ENCODE measurements at regions of chr2 and their contacts with region 1.

Region 1: GRCh38 chr2:199739413-199740110 is 111.4 kb downstream of the FTCDNL1 start:
- DNase-seq: peak; percentile 57 to 96
- H3K4me3 ChIP-seq: no peak overlapping the region
- H3K27ac ChIP-seq: no peak overlapping the region
- H3K4me1 ChIP-seq: peaks cover 2 to 11% (median 6%) of the 10 kb centered on the region in 4 experiments; a peak in 4 of 7 replicates
- H3K27me3 ChIP-seq: no peaks in the 10 kb centered on the region
- CTCF ChIP-seq: peak; percentile 76 to 82 (median 81)
- EP300 ChIP-seq: no peak
- POLR2A ChIP-seq: no peak
- RAD21 ChIP-seq: peak; percentile 91 to 92

Region 2: DNA sequence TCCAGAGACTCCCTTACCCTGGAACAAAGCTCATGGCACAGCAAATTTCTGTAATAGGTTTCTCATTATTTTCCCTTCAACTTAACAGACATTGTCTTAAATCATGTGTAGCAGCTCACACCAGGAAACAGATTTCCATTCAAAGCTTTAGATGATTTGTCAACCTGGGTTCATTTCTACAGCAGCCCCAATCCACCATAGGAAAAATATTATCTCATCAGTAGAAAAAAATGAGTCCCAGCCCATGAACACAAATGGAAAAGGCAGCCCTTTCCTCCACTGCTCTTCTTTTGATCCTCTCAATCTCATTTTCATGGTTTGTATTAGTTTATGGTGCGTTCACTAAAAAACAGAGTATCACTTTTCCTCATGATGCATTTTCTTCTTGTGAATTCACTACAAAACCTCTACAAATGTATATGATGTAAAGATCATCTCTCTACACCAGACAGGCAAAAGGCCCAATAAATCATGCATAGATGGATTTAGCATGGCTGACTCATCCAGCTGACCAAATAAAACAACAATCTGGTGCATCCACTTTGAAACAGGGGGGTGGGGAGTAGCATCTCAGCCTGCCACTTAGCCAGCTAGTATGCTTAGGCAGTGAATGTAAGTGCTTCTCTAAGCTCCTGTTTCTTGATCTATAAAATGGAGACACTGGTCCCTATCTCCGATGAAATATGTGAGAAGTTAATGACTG is 360.5 kb before region 1 on chr2:
- CTCF ChIA-PET with region 1: no interaction called
- POLR2A ChIA-PET with region 1: no interaction called
- DNase-seq: no peak
- H3K4me3 ChIP-seq: no peak overlapping the region
- H3K27ac ChIP-seq: no peak overlapping the region
- H3K4me1 ChIP-seq: no peaks in the 10 kb centered on the region
- H3K27me3 ChIP-seq: no peaks in the 10 kb centered on the region
- CTCF ChIP-seq: no peak
- EP300 ChIP-seq: no peak
- POLR2A ChIP-seq: no peak
- RAD21 ChIP-seq: no peak

Region 3: GRCh38 chr2:199471443-199472057 is 268.0 kb before region 1 on chr2:
- CTCF ChIA-PET with region 1: interaction called, 15 read pairs
- POLR2A ChIA-PET with region 1: no interaction called
- DNase-seq: peak in 1 of 2 experiments; percentile 94
- H3K4me3 ChIP-seq: peak overlapping the region; percentile 29 to 60 (median 40); a peak in 7 of 8 replicates
- H3K27ac ChIP-seq: no peak overlapping the region
- H3K4me1 ChIP-seq: peaks cover 8 to 23% (median 14%) of the 10 kb centered on the region in 4 experiments
- H3K27me3 ChIP-seq: peaks cover 41 to 61% (median 57%) of the 10 kb centered on the region in 4 experiments
- CTCF ChIP-seq: peak in 2 of 3 experiments; percentile 81 to 93; a peak in 3 of 4 replicates
- EP300 ChIP-seq: 0 out of 3 replicates have a peak, but pooled peaks of 1 of the 2 experiments have one; percentile 23
- POLR2A ChIP-seq: no peak
- RAD21 ChIP-seq: peak; percentile 54 to 70

Region 4: GRCh38 chr2:199596549-199596948 is 143.0 kb before region 1 on chr2:
- CTCF ChIA-PET with region 1: interaction called, 13 read pairs
- POLR2A ChIA-PET with region 1: no interaction called
- DNase-seq: no peak
- H3K4me3 ChIP-seq: no peak overlapping the region
- H3K27ac ChIP-seq: no peak overlapping the region
- H3K4me1 ChIP-seq: no peaks in the 10 kb centered on the region
- H3K27me3 ChIP-seq: no peaks in the 10 kb centered on the region
- CTCF ChIP-seq: peak in 2 of 3 experiments; percentile 51 to 59; a peak in 3 of 4 replicates
- EP300 ChIP-seq: no peak
- POLR2A ChIP-seq: no peak
- RAD21 ChIP-seq: peak; percentile 37 to 53; a peak in 3 of 4 replicates

Region 5: DNA sequence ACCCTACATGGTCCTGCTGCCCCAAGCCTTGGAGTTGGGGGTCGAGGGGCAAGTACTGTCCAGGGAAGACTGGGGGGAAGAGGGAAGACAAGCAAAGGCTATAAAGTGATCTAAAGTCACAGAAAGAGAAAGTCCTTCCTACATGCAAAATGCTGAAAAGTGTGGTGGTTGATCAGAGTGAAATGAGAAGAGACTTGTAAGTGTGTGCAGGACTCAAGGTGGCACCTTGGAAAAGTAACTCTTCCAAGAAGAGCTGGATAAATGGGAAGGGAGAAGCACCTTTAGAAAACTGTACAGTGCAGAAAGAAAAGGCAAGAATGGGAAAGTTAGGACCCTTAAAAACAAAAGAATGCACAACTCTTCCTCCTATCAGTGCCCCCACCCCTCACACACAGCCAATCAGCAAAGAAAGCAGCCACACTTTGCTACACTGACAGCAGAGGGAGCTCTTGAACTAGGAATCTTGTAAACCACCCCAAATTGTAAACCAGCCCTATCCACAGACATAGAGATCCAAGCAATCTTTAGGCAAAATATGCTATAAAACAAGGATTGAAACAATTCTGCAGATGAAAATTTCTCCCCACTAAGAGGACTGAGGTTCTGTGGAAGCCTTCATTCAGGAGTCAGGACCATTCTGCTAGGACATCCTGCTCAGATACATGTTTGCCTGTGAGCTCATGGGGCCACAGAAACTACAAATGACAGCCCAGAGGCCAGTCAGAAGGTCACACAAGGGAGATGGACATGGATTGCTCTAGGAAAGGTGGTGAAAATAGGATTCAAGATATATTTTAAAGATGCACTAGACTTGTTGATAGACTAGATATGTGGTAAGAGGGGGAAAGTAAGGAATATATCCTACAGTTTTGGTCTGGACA is 35.0 kb before region 1 on chr2:
- CTCF ChIA-PET with region 1: interaction called, 68 read pairs
- POLR2A ChIA-PET with region 1: interaction called, 3 read pairs
- DNase-seq: peak in 1 of 2 experiments; percentile 59
- H3K4me3 ChIP-seq: no peak overlapping the region
- H3K27ac ChIP-seq: no peak overlapping the region
- H3K4me1 ChIP-seq: no peaks in the 10 kb centered on the region
- H3K27me3 ChIP-seq: no peaks in the 10 kb centered on the region
- CTCF ChIP-seq: peak; percentile 34 to 87 (median 85)
- EP300 ChIP-seq: no peak
- POLR2A ChIP-seq: no peak
- RAD21 ChIP-seq: peak; percentile 92 to 96

Region 6: GRCh38 chr2:199716807-199717586 is 22.6 kb before region 1 on chr2:
- CTCF ChIA-PET with region 1: interaction called, 12 read pairs
- POLR2A ChIA-PET with region 1: no interaction called
- DNase-seq: no peak
- H3K4me3 ChIP-seq: no peak overlapping the region
- H3K27ac ChIP-seq: no peak overlapping the region
- H3K4me1 ChIP-seq: no peaks in the 10 kb centered on the region
- H3K27me3 ChIP-seq: no peaks in the 10 kb centered on the region
- CTCF ChIP-seq: no peak
- EP300 ChIP-seq: no peak
- POLR2A ChIP-seq: no peak
- RAD21 ChIP-seq: no peak

Region 7: DNA sequence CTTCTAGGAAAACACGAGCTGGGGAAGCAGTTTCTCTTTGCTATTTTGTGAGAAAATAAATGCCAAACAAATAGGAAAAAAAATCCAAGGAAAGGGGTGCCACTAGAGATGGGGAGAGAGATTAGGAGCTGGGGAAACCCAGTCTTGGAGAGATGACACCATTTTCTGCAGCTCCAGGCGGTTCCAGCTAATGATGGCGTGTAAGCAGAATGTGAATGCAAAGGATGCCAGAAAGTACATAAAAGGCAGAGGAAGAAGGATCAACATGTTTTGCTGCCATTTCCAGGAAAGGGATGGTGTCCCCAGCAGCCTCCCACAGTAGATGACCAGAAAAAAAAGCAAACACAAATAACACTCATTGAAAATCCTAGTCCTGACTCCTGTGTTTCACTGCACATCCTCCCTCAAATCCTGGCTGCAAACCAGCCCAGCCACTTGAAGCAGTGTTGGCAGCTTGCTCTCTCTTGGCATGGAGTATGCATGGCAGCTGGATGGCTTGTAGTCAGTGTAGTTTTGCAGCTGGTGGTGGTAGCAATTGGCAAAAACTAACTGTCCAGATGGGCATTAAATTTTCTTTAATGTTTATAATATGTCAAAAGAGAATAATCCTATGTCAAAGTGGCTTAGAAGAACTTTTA is 17.8 kb after region 1 on chr2:
- CTCF ChIA-PET with region 1: interaction called, 82 read pairs
- POLR2A ChIA-PET with region 1: no interaction called
- DNase-seq: no peak
- H3K4me3 ChIP-seq: no peak overlapping the region
- H3K27ac ChIP-seq: no peak overlapping the region
- H3K4me1 ChIP-seq: no peaks in the 10 kb centered on the region; a peak in 1 of 7 replicates
- H3K27me3 ChIP-seq: peaks cover 0 to 2% (median 0%) of the 10 kb centered on the region in 4 experiments; a peak in 1 of 7 replicates
- CTCF ChIP-seq: no peak
- EP300 ChIP-seq: no peak
- POLR2A ChIP-seq: no peak
- RAD21 ChIP-seq: no peak

Region 8: DNA sequence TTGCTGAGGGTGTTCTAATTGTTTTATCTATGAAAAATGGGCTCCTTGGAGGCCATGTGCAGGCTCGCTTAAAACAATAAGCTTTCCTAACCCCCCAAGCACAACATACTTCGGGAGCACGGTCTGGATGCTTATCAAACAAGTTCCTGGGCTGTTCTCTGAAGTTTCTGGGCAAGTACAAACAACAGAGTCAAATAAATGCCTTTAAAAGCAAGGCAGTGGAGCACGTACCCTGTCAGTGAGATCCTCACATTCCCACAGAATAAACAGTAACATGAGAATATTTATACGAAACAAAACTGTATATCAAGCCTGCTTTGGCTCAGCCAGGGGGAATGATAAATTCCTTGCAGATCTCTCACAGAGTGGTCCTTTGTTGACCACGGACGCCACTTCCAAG is 66.6 kb after region 1 on chr2:
- CTCF ChIA-PET with region 1: interaction called, 10 read pairs
- POLR2A ChIA-PET with region 1: no interaction called
- DNase-seq: no peak
- H3K4me3 ChIP-seq: no peak overlapping the region
- H3K27ac ChIP-seq: no peak overlapping the region
- H3K4me1 ChIP-seq: peaks cover 0 to 7% (median 2%) of the 10 kb centered on the region in 4 experiments; a peak in 6 of 7 replicates
- H3K27me3 ChIP-seq: no peaks in the 10 kb centered on the region; a peak in 1 of 7 replicates
- CTCF ChIP-seq: no peak
- EP300 ChIP-seq: no peak
- POLR2A ChIP-seq: no peak
- RAD21 ChIP-seq: no peak

Measured in H1 (cell line).